ENCODE measurements at regions of chr17 and their contacts with region 1.

Region 1: DNA sequence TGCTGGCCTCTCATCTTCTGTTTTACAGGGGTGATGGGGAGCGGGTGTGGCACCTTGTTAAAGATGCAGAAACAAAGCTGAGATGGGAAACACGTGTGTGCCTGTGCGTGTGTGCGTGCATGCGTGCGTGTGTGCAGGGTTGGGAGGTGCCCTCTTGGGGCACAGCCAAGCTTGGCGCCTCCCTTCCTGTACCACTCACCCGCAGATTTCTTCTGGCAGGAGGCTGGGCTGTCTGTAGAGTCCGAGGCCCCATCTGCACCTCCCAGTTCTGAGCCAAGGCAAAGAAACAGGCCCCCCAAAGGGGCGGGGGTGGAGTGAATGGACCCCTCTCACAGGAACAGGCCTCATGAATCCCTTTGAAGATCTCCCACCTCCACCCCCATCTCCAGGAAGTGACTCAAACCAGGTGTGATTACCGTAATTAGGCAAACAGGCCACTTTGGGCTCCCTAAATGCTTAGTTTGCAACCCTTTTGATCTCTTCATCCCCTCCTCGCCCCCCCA is 20.9 kb downstream of the TNS4 start:
- DNase-seq: peak; percentile 98
- ATAC-seq: peak; percentile 91
- H3K4me3 Mint-ChIP-seq: peak overlapping the region; percentile 74
- H3K27ac Mint-ChIP-seq: peak overlapping the region; percentile 98
- H3K4me1 Mint-ChIP-seq: peaks cover 59% of the 10 kb centered on the region
- H3K27me3 Mint-ChIP-seq: no peaks in the 10 kb centered on the region
- CTCF ChIP-seq: no peak

Region 2: DNA sequence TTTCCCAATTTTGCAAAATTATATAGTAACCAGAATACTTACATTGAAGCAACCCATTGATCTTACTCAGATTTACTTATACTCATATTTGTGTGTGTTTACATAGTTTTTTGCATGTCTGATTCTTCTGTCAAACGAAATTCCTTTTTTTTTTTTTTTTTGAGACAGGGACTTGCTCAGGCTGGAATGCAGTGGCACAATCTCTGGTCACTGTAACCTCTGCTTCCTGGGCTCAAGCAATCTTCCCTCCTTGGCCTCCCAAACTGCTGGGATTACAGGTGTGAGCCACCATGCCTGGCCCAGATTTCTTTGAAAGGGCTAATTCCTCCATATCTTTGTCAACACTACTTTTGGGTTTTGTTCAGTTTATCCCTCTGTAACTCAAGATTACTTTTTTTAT is 92.9 kb before region 1 on chr17:
- CTCF ChIA-PET with region 1: no interaction called
- POLR2A ChIA-PET with region 1: no interaction called
- intact Hi-C with region 1: no loop called
- DNase-seq: no peak
- ATAC-seq: no peak
- H3K4me3 Mint-ChIP-seq: no peak overlapping the region
- H3K27ac Mint-ChIP-seq: no peak overlapping the region
- H3K4me1 Mint-ChIP-seq: no peaks in the 10 kb centered on the region
- H3K27me3 Mint-ChIP-seq: no peaks in the 10 kb centered on the region
- CTCF ChIP-seq: no peak

Region 3: DNA sequence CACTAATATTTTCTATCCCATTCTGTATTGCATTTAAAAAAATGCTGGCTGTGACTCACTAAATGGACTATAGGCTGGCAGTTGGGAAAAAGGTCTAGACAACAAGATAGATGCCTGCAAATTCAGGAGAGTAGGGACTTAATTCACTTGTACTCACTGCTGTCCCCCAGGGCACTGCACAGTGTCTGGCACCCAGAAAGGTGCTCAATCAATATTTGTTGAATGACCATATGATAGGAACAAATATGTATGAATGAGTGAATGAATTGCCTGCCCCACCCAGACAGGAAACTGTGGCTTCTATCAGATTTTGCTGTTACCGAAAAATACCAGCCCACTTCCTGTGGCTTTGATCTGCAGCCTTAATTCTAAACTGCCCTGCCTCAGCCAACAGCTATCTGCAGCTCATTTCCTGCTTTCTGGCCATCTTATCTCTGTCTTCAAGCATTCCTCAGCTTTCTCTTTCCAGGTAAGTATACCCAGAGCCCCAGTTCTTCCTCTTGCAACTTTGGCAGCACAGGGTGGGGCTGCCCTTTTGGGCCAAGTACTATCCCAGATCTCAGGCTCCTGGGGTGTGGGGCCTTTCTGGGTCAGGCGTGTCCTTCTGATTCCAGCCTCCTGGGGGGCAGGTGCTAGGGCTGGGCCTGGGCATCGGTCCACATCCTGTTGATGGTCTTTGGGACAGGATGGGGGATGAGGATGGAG is 36.2 kb after region 1 on chr17:
- CTCF ChIA-PET with region 1: interaction called, 7 read pairs
- POLR2A ChIA-PET with region 1: interaction called, 3 read pairs
- intact Hi-C with region 1: loop called (anchors 5 kb)
- DNase-seq: peak; percentile 87
- ATAC-seq: peak; percentile 81
- H3K4me3 Mint-ChIP-seq: peak overlapping the region; percentile 66
- H3K27ac Mint-ChIP-seq: peak overlapping the region; percentile 89
- H3K4me1 Mint-ChIP-seq: peaks cover 60% of the 10 kb centered on the region
- H3K27me3 Mint-ChIP-seq: peaks cover 4% of the 10 kb centered on the region
- CTCF ChIP-seq: no peak

Region 4: GRCh38 chr17:40542558-40543411 is 62.2 kb after region 1 on chr17:
- CTCF ChIA-PET with region 1: interaction called, 7 read pairs
- POLR2A ChIA-PET with region 1: interaction called, 18 read pairs
- intact Hi-C with region 1: no loop called
- DNase-seq: peak; percentile 91
- ATAC-seq: peak; percentile 60
- H3K4me3 Mint-ChIP-seq: peak overlapping the region; percentile 71
- H3K27ac Mint-ChIP-seq: peak overlapping the region; percentile 93
- H3K4me1 Mint-ChIP-seq: peaks cover 91% of the 10 kb centered on the region
- H3K27me3 Mint-ChIP-seq: no peaks in the 10 kb centered on the region
- CTCF ChIP-seq: no peak

Measured in activated CD8-positive, alpha-beta T cell treated with anti-CD3 and anti-CD28 coated beads for 36 hours (primary cell).